ENCODE measurements at regions of chr20 and their contacts with region 1.

Region 1: DNA sequence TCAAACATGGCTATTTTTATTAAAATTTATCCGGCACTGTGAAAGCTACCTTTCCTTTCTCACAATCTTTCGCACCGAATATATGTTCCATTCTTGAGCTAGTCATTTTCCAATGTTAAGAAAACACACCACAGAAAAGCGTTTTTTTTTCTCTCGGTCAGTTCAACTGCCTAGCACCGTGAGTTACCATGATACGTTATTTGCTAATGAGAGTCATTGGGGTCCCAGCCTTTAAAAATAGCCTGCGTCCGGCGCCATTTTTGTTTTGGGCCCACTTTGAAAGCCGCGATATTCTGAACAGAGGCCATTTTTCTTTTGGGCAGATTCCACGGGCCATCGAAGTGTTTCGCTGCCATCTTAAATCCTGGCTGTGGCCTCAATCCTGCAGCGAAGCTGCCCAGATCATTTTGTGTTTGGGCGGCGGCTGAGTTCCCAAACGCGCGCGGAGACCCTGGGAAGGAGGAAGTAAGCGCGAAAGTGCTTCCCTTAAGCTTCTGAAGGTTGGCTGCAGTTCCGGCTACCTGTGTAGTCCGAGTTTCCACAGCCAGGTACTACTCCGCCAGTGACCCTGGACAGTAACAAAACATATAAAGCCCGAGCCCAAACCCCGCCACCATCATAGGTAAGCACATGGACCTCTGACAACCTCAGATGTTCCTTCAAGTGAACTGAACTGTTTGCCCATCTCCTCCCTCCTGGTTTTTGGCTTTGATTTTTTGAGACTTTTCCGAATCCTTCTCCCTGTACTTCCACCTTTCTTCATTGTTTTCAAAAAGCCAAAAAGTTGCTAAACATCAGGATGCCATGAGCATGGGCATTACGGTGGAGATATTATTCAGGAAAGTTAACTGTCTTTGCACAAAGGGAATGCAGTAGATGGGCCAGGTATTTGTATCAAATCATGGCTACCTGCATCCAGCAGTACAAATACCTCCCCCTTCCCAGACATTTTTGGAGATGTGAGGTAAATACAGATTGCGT is at the start of gene SLX4IP:
- DNase-seq: peak; percentile 97
- H3K4me3 Mint-ChIP-seq: peak within 1 kb of the TSS; percentile 86
- H3K27ac Mint-ChIP-seq: peak within 1 kb of the TSS; percentile 94
- H3K4me1 Mint-ChIP-seq: peaks cover 12% of the 10 kb centered on the region
- H3K27me3 Mint-ChIP-seq: no peaks in the 10 kb centered on the region
- CTCF ChIP-seq: no peak
- total RNA-seq, gene SLX4IP: 11.2 and 12.9 TPM in 2 replicates

Region 2: GRCh38 chr20:10034717-10035571 is 400.2 kb before region 1 on chr20 and contains the start of gene ANKEF1:
- CTCF ChIA-PET with region 1: no interaction called
- POLR2A ChIA-PET with region 1: interaction called, 20 read pairs
- intact Hi-C with region 1: no loop called
- DNase-seq: peak; percentile 72
- H3K4me3 Mint-ChIP-seq: peak within 1 kb of the TSS; percentile 73
- H3K27ac Mint-ChIP-seq: peak within 1 kb of the TSS; percentile 57
- H3K4me1 Mint-ChIP-seq: peaks cover 1% of the 10 kb centered on the region
- H3K27me3 Mint-ChIP-seq: no peaks in the 10 kb centered on the region
- CTCF ChIP-seq: no peak
- total RNA-seq, gene ANKEF1: 5.6 and 7.2 TPM in 2 replicates

Region 3: GRCh38 chr20:10282979-10283456 is 152.1 kb before region 1 on chr20:
- CTCF ChIA-PET with region 1: no interaction called
- POLR2A ChIA-PET with region 1: no interaction called
- intact Hi-C with region 1: no loop called
- DNase-seq: no peak
- H3K4me3 Mint-ChIP-seq: no peak overlapping the region
- H3K27ac Mint-ChIP-seq: no peak overlapping the region
- H3K4me1 Mint-ChIP-seq: peaks cover 13% of the 10 kb centered on the region
- H3K27me3 Mint-ChIP-seq: no peaks in the 10 kb centered on the region
- CTCF ChIP-seq: no peak

Region 4: DNA sequence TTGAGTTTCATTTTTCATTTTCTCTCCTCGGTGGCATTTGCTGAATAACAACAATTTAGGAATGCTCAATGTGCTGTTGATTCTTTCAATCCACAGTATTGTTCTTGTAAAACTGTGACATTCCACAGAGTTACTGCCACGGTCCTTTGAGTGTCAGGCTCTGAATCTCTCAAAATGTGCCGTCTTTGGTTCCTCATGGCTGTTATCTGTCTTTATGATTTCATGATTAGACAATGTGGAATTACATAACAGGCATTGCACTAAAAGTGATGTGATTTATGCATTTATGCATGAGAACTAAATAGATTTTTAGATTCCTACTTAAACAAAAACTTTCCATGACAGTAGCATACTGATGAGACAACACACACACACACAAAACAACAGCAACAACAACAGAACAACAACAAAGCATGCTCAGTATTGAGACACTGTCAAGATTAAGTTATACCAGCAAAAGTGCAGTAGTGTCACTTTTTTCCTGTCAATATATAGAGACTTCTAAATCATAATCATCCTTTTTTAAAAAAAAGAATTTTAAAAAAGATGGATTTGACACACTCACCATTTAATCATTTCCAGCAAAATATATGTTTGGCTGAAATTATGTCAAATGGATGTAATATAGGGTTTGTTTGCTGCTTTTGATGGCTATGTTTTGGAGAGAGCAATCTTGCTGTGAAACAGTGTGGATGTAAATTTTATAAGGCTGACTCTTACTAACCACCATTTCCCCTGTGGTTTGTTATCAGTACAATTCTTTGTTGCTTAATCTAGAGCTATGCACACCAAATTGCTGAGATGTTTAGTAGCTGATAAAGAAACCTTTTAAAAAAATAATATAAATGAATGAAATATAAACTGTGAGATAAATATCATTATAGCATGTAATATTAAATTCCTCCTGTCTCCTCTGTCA is 128.4 kb before region 1 on chr20:
- CTCF ChIA-PET with region 1: no interaction called
- POLR2A ChIA-PET with region 1: no interaction called
- intact Hi-C with region 1: no loop called
- DNase-seq: no peak
- H3K4me3 Mint-ChIP-seq: no peak overlapping the region
- H3K27ac Mint-ChIP-seq: no peak overlapping the region
- H3K4me1 Mint-ChIP-seq: peaks cover 33% of the 10 kb centered on the region
- H3K27me3 Mint-ChIP-seq: no peaks in the 10 kb centered on the region
- CTCF ChIP-seq: no peak

Region 5: GRCh38 chr20:10447027-10447426 is 11.9 kb after region 1 on chr20:
- CTCF ChIA-PET with region 1: no interaction called
- POLR2A ChIA-PET with region 1: interaction called, 28 read pairs
- intact Hi-C with region 1: loop called (anchors 1 kb)
- DNase-seq: peak; percentile 87
- H3K4me3 Mint-ChIP-seq: peak overlapping the region; percentile 56
- H3K27ac Mint-ChIP-seq: peak overlapping the region; percentile 70
- H3K4me1 Mint-ChIP-seq: peaks cover 17% of the 10 kb centered on the region
- H3K27me3 Mint-ChIP-seq: no peaks in the 10 kb centered on the region
- CTCF ChIP-seq: no peak

Region 6: GRCh38 chr20:10511509-10512251 is 76.6 kb after region 1 on chr20:
- CTCF ChIA-PET with region 1: interaction called, 7 read pairs
- POLR2A ChIA-PET with region 1: interaction called, 135 read pairs
- intact Hi-C with region 1: no loop called
- DNase-seq: peak; percentile 97
- H3K4me3 Mint-ChIP-seq: peak overlapping the region; percentile 56
- H3K27ac Mint-ChIP-seq: peak overlapping the region; percentile 89
- H3K4me1 Mint-ChIP-seq: peaks cover 45% of the 10 kb centered on the region
- H3K27me3 Mint-ChIP-seq: no peaks in the 10 kb centered on the region
- CTCF ChIP-seq: no peak

Region 7: DNA sequence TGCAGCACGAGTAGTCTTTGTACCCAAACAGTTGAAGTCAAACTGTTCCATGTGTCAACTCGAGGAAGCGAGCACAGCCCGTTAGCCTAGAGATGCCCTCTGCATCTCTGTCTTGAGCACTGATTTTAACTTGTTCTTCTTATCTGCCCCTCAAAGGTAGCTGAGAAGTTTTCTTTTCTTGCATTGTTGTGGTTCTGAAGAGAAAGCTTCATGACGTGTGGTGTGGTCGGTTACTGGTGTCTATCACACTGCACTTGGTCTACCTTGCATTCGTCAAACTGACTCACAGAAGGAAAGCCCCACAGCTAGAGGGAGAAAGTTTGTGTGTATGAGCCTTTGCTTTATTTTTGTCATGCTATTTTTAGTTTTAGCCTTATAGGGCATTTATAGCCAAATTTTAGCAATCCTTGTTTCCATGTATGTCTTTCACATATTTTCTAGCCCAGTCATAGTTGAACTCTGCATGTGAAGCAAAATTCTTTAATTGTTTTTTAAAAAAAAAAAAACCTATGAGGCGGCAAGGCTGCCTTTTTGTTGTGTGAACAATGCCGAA is 123.6 kb after region 1 on chr20:
- CTCF ChIA-PET with region 1: no interaction called
- POLR2A ChIA-PET with region 1: interaction called, 20 read pairs
- intact Hi-C with region 1: no loop called
- DNase-seq: peak; percentile 90
- H3K4me3 Mint-ChIP-seq: peak overlapping the region; percentile 18
- H3K27ac Mint-ChIP-seq: peak overlapping the region; percentile 68
- H3K4me1 Mint-ChIP-seq: peaks cover 26% of the 10 kb centered on the region
- H3K27me3 Mint-ChIP-seq: no peaks in the 10 kb centered on the region
- CTCF ChIP-seq: no peak

Region 8: DNA sequence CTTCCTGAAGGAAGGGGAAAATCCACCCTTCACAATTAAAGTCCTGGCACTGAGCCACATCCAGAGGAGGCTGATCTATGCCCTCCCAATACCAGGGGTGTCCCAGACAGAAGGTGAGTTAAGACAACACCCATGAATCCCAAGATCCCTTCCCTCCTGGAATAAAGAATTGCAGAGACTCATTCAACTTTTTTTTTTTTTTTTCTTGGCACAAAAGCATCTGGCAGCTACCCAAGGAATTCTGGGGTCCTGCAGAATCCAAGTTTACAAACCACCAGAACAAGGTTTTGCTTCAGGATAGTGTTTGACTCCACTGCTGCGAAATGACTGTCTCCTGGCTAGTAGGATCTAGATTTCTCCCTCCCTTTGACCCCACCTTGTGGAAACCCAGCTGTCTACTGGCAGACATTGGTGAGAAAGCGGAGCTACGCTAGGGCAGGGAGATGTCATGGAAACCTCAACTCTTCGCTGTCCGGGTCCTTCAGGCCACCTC is 201.2 kb after region 1 on chr20:
- CTCF ChIA-PET with region 1: interaction called, 4 read pairs
- POLR2A ChIA-PET with region 1: interaction called, 21 read pairs
- intact Hi-C with region 1: no loop called
- DNase-seq: peak; percentile 90
- H3K4me3 Mint-ChIP-seq: peak overlapping the region; percentile 29
- H3K27ac Mint-ChIP-seq: peak overlapping the region; percentile 85
- H3K4me1 Mint-ChIP-seq: peaks cover 44% of the 10 kb centered on the region
- H3K27me3 Mint-ChIP-seq: no peaks in the 10 kb centered on the region
- CTCF ChIP-seq: no peak